Naive thymus-derived CD8-positive, alpha-beta T cell (primary cell): ENCODE measurements at regions of chr2 and their contacts with region 1.

Region 1: DNA sequence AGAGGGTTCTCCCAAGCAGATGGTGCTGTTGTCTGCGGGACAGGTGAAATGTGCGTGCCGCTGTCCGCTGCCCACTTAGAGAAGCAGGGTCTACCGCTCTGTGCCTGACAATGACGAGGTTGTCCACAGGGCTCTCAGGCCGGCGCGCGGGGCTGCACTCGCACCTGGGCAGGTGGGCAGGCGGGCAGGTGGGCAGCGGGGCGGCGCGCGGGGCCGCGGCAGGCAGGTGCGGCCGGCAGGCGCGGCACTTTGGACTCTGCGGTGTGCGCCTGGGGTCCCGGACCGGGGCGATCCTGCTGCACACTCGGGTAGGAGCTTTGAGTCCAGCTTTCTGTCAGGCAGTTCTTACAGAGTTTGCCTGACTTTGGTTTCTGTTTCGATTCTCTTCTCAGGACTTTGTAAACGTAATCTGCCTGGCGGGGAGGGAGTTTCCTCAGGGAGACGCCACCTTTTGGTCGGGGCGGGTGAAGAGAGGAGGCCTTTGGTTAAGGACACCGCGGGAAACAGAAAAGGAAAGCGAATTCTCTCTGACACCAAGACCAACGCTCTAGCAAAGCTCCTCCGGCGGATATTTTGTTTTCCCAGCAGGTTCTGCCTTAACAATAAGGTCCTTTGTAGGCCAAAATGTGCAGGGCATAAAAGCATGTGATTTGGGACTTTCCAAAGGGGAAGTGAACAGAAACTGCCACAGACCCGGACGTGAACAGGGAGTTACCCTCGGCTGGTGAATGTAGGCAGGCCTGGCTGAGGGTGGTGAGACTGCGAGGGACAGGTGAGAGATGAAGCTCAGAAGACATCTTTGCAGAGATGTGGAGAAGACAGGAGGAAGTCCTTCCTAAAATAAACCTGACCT is at the start of gene IFIH1:
- DNase-seq: peak; percentile 48 to 84 (median 75)
- ATAC-seq: peak; percentile 86 to 91
- H3K4me3 Mint-ChIP-seq: peak within 1 kb of the TSS; percentile 90 to 100 (median 98)
- H3K27ac Mint-ChIP-seq: peak within 1 kb of the TSS; percentile 98 to 100 (median 100)
- H3K4me1 Mint-ChIP-seq: peaks cover 27 to 73% (median 66%) of the 10 kb centered on the region in 4 donors
- H3K27me3 Mint-ChIP-seq: no peaks in the 10 kb centered on the region
- polyA plus RNA-seq, gene IFIH1: 10.6 to 15.7 (median 12.6) TPM

Region 2: DNA sequence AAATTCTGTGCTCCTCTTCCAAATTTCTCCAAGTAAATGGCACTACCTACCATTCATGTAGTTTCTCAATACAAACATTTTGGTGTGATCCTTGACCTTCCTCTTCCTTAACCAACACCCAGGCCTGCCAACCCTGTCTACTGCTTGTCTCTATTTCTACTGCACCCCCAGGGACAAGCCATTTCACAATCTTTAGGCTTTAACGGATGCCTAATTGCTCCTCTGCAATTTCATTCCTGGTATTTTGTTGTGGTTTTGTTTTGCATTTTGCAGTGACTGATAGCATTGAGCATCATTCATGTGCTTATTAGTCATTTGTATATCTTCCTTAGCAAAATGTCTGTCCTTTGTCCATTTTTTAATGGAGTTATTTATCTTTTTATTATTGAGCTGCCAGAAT is 85.4 kb before region 1 on chr2:
- POLR2A ChIA-PET with region 1: no interaction called
- DNase-seq: no peak
- ATAC-seq: no peak
- H3K4me3 Mint-ChIP-seq: no peak overlapping the region
- H3K27ac Mint-ChIP-seq: peak overlapping the region in 1 of 10 donors; percentile 49
- H3K4me1 Mint-ChIP-seq: no peaks in the 10 kb centered on the region
- H3K27me3 Mint-ChIP-seq: peaks cover 5 to 28% (median 11%) of the 10 kb centered on the region in 5 donors

Region 3: GRCh38 chr2:162244541-162245031 is 74.0 kb before region 1 on chr2:
- POLR2A ChIA-PET with region 1: no interaction called
- DNase-seq: no peak
- ATAC-seq: no peak
- H3K4me3 Mint-ChIP-seq: no peak overlapping the region
- H3K27ac Mint-ChIP-seq: peak overlapping the region in 1 of 10 donors; percentile 46
- H3K4me1 Mint-ChIP-seq: no peaks in the 10 kb centered on the region
- H3K27me3 Mint-ChIP-seq: peaks cover 12 to 15% (median 14%) of the 10 kb centered on the region in 5 donors

Region 4: DNA sequence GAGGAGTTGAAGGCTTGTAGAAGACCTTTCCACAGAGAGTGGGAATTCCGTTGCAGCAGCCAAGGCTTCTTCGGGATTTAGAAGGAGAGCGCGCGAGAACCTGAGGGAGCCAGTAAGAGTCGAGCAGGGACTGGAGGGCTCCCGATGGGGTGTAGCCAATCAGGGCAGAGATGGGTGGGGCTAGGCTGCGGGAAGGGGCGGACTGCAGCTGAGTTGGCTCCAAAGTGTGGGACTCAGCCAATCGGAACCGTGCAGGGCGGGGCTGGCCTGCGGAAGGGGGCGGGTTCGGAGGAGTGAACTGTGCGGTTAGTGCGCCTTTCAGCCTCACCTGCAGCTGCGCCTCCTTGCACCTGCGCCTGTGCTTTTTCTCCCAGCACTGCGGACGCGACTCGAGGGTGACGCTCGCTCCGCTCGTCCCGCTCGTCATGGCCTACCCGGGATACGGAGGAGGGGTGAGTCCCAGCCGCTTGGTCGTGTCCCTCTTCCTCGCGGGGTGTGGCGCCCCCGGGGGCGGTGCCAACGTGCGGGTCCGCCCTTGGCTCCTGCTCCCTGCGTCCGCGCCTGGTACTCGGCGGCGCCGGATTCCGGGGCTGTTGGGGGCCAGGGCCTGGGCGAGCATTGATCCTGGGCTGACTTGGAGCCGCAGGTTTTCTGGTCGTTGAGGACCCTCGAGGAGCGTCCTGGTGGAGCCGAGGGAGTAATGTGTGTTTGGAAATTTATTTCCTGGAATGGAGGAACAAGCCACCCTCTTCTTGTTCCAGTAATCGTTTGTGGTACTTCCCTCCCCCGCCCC is 25.5 kb after region 1 on chr2 and contains the start of gene GCA:
- POLR2A ChIA-PET with region 1: interaction called, 12 read pairs
- DNase-seq: peak; percentile 93 to 99 (median 98)
- ATAC-seq: peak; percentile 96 to 97
- H3K4me3 Mint-ChIP-seq: peak within 1 kb of the TSS; percentile 86 to 95 (median 93)
- H3K27ac Mint-ChIP-seq: peak within 1 kb of the TSS; percentile 45 to 96 (median 82)
- H3K4me1 Mint-ChIP-seq: peaks cover 10 to 23% (median 15%) of the 10 kb centered on the region in 4 donors
- H3K27me3 Mint-ChIP-seq: peaks cover 0 to 4% (median 0%) of the 10 kb centered on the region in 5 donors
- polyA plus RNA-seq, gene GCA: 12.2 to 19.1 (median 16.4) TPM